CD8-positive, alpha-beta T cell (primary cell): ENCODE measurements at regions of chr12 and their contacts with region 1.

Region 1: DNA sequence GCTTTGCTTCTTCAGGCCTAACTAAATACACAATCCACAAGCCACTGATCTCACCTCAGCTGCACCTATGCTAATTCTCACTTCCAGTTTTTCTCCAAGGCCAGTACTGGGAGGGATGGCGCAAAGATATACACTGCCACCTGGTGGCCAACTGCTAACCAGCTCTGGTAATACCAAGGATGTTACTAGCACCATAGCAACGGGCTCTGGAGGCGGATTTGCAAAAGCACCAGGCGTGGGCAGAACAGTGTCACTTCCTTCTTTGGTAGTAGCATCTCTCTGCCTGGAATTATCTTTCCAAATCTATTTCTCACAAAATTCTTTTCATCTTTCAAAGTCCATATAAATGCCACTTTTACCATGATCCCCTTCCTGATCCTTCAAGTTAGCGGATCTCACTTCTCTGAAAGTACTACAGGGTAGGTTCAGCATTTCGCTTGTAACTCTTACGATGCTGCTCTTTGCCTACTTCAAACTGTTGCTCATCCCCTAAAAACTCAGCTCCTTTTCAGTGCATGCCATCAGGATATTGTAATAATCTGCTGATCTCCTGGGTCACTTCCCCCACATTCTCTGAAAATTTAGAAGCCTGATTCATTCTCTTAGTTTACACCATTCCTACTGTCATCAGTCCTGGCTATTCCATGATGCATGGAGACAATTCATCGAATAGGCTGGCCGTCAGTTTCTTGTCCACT is 37.1 kb upstream of the FOXJ2 start:
- DNase-seq: peak; percentile 65 to 91 (median 81)
- ATAC-seq: peak; percentile 99
- H3K4me3 ChIP-seq: no peak overlapping the region
- H3K4me3 Mint-ChIP-seq: no peak overlapping the region
- H3K27ac ChIP-seq: peak overlapping the region; percentile 29 to 60
- H3K27ac Mint-ChIP-seq: no peak overlapping the region
- H3K4me1 ChIP-seq: peaks cover 9% of the 10 kb centered on the region
- H3K4me1 Mint-ChIP-seq: peaks cover 13% of the 10 kb centered on the region
- H3K27me3 ChIP-seq: no peaks in the 10 kb centered on the region
- H3K27me3 Mint-ChIP-seq: no peaks in the 10 kb centered on the region
- CTCF ChIP-seq: peak; percentile 75

Region 2: DNA sequence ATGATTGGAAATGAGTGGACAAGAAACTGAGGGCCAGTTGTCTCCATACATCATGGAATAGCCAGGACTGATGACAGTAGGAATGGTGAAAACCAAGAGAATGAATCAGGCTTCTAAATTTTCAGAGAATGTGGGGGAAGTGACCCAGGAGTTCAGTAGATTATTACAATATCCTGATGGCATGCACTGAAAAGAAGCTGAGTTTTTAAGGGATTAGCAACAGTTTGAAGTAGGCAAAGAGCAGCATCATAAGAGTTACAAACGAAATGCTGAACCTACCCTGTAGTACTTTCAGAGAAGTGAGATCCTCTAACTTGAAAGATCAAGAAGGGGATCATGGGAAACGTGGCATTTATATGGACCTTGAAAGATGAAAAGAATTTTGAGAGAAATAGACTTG is 135.9 kb before region 1 on chr12:
- CTCF ChIA-PET with region 1: interaction called, 55 read pairs
- POLR2A ChIA-PET with region 1: interaction called, 3 read pairs
- intact Hi-C with region 1: loop called (anchors 1 kb)
- DNase-seq: no peak
- ATAC-seq: no peak
- H3K4me3 ChIP-seq: no peak overlapping the region
- H3K4me3 Mint-ChIP-seq: no peak overlapping the region
- H3K27ac ChIP-seq: no peak overlapping the region
- H3K27ac Mint-ChIP-seq: no peak overlapping the region
- H3K4me1 ChIP-seq: no peaks in the 10 kb centered on the region
- H3K4me1 Mint-ChIP-seq: peaks cover 9% of the 10 kb centered on the region
- H3K27me3 ChIP-seq: no peaks in the 10 kb centered on the region
- H3K27me3 Mint-ChIP-seq: peaks cover 5% of the 10 kb centered on the region
- CTCF ChIP-seq: no peak

Region 3: DNA sequence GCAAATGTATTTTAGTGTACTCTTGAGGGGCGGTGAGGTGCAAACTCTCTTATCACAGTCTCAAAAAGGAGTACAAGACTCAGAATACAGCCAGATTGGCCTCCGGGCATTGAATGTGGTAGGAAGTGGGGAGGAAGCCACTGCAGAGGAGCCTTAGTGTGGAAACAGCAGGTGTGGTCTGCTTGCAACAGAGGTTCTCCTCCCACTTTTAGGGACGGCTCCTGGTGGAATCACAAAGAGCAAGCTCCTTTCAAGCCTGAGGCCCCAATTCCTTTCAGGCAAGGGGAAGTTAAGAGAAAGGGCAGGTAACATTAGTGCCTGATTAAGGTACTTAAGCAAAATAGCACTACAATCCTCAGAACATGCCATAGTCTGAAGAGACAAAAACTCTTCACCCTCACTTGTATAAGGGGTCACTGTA is 35.7 kb before region 1 on chr12:
- CTCF ChIA-PET with region 1: interaction called, 30 read pairs
- POLR2A ChIA-PET with region 1: interaction called, 6 read pairs
- intact Hi-C with region 1: loop called (anchors 1 to 2 kb)
- DNase-seq: peak in 7 of 9 experiments; percentile 45 to 81 (median 62)
- ATAC-seq: peak; percentile 25
- H3K4me3 ChIP-seq: peak overlapping the region; percentile 58 to 65
- H3K4me3 Mint-ChIP-seq: peak overlapping the region; percentile 87
- H3K27ac ChIP-seq: peak overlapping the region; percentile 84 to 85
- H3K27ac Mint-ChIP-seq: peak overlapping the region; percentile 94
- H3K4me1 ChIP-seq: peaks cover 33% of the 10 kb centered on the region
- H3K4me1 Mint-ChIP-seq: peaks cover 39% of the 10 kb centered on the region
- H3K27me3 ChIP-seq: no peaks in the 10 kb centered on the region
- H3K27me3 Mint-ChIP-seq: no peaks in the 10 kb centered on the region
- CTCF ChIP-seq: no peak

Region 4: DNA sequence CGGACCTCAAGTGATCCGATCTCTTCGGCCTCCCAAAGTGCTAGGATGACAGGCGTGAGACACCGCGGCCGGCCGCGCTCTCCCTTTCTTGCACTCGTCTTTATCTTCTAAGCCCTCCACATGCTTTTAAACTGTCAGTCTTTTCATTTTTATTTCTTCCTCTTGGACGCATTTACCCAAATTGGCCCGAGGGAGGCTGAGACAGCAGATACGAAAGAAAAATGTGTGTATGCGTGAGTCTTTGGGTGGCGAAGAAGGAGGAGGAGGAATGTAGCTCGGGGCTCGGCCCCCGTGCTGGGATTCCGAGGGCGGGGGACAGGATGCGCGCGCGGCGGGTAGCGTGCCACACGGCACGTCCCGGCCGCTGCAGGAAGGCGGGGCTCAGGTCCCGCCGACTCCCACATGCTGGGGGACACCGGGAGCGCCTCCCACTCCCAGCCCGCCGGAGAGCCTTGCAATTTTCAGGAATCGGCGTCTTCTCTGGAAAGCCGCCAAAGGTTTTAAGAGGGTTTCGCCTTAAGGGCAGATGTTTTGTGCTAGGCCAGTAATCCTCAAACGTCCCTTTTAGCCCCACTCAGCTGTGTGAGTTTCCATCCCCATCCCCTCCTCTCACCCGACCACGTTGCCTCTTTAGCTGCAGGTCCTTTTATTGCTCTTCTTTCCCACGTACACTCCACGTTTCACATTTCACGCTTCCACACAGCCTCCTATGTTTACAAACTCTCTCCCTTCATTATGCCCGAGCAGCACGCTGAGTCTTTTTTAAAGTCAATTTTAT is 24.8 kb before region 1 on chr12:
- CTCF ChIA-PET with region 1: interaction called, 9 read pairs
- POLR2A ChIA-PET with region 1: no interaction called
- intact Hi-C with region 1: loop called (anchors 1 to 2 kb)
- DNase-seq: peak; percentile 61 to 96 (median 88)
- ATAC-seq: peak; percentile 87
- H3K4me3 ChIP-seq: peak overlapping the region; percentile 67 to 90
- H3K4me3 Mint-ChIP-seq: peak overlapping the region; percentile 83
- H3K27ac ChIP-seq: peak overlapping the region; percentile 90 to 94
- H3K27ac Mint-ChIP-seq: peak overlapping the region; percentile 96
- H3K4me1 ChIP-seq: peaks cover 15% of the 10 kb centered on the region
- H3K4me1 Mint-ChIP-seq: peaks cover 27% of the 10 kb centered on the region
- H3K27me3 ChIP-seq: no peaks in the 10 kb centered on the region
- H3K27me3 Mint-ChIP-seq: no peaks in the 10 kb centered on the region
- CTCF ChIP-seq: no peak

Region 5: DNA sequence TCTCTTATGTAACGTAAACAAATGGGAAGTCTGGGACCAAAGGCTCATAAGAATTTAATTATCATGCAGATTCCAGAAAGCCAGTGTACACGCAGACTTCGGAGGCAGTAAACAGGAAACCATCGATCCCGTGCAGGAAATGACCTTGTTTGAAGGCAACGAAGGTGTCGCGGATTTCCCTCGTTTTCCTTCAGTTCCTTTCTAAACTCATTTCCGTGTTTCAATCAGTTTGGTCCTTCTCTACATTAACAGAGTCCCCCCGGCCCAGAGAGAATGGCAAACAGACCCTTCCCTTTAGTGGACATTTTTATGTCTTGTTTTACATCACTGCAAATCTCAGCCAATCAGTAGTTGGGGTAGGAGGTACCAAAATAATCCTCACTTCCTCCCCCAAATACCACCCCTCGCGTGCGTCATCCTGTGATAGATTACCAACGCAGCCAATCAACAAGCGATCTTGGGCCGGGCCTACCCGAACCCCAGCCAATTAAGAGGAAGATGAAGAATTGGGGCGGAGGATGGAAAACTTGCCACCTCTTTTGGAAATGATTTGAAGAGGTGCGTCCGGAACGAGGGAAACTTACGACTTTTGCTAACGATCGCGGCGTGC is 31.0 kb after region 1 on chr12:
- CTCF ChIA-PET with region 1: interaction called, 6 read pairs
- POLR2A ChIA-PET with region 1: no interaction called
- intact Hi-C with region 1: loop called in 1 of 2 experiments (anchors 1 kb)
- DNase-seq: peak; percentile 90 to 99 (median 94)
- ATAC-seq: peak; percentile 89
- H3K4me3 ChIP-seq: peak overlapping the region; percentile 84 to 93
- H3K4me3 Mint-ChIP-seq: peak overlapping the region; percentile 95
- H3K27ac ChIP-seq: peak overlapping the region; percentile 97 to 100
- H3K27ac Mint-ChIP-seq: peak overlapping the region; percentile 100
- H3K4me1 ChIP-seq: peaks cover 6% of the 10 kb centered on the region
- H3K4me1 Mint-ChIP-seq: peaks cover 21% of the 10 kb centered on the region
- H3K27me3 ChIP-seq: no peaks in the 10 kb centered on the region
- H3K27me3 Mint-ChIP-seq: no peaks in the 10 kb centered on the region
- CTCF ChIP-seq: no peak

Region 6: DNA sequence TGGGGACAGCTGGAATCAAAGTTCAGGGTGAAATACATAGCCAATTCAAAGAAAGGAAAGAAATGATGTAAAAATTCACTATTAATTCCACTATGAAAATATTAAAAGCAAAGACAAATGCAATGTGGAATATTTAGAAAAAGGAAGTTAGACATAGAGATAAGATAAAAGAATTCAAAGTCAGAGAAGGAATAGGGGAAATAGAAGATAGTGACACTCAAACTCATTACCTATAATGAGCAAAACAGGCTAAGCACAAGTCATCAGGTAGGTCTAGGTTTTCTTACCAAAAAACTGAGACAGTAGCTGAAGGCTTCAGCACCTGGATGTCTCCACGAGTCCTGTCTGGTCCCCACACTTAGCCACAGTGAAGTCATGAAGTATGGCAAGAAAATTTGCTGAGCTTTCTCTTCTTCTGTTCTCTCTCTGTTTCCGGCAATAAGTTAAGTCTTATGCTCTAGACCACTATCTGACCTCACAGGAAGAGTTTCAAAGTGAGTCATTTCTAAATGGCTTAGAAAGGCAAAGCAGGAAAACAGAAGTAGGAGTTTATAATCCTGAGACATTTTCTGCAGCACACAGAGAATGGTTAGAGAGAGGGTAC is 70.7 kb after region 1 on chr12 and contains the start of gene C3AR1:
- CTCF ChIA-PET with region 1: no interaction called
- POLR2A ChIA-PET with region 1: no interaction called
- intact Hi-C with region 1: loop called in 1 of 2 experiments (anchors 5 kb)
- DNase-seq: peak in 7 of 9 experiments; percentile 30 to 87 (median 57)
- ATAC-seq: peak; percentile 97
- H3K4me3 ChIP-seq: peak within 1 kb of the TSS; percentile 5 to 33
- H3K4me3 Mint-ChIP-seq: peak within 1 kb of the TSS; percentile 53
- H3K27ac ChIP-seq: peak within 1 kb of the TSS; percentile 22 to 80
- H3K27ac Mint-ChIP-seq: peak within 1 kb of the TSS; percentile 87
- H3K4me1 ChIP-seq: peaks cover 22% of the 10 kb centered on the region
- H3K4me1 Mint-ChIP-seq: peaks cover 22% of the 10 kb centered on the region
- H3K27me3 ChIP-seq: no peaks in the 10 kb centered on the region
- H3K27me3 Mint-ChIP-seq: no peaks in the 10 kb centered on the region
- CTCF ChIP-seq: no peak
- total RNA-seq, gene C3AR1: 1.8 to 2.8 TPM